GM10248 (cell line): ENCODE measurements at regions of chr6 and their contacts with region 1.

Region 1: GRCh38 chr6:100366419-100366818 is 98.3 kb downstream of the SIM1 start:
- DNase-seq: no peak
- CTCF ChIP-seq: no peak

Region 2: DNA sequence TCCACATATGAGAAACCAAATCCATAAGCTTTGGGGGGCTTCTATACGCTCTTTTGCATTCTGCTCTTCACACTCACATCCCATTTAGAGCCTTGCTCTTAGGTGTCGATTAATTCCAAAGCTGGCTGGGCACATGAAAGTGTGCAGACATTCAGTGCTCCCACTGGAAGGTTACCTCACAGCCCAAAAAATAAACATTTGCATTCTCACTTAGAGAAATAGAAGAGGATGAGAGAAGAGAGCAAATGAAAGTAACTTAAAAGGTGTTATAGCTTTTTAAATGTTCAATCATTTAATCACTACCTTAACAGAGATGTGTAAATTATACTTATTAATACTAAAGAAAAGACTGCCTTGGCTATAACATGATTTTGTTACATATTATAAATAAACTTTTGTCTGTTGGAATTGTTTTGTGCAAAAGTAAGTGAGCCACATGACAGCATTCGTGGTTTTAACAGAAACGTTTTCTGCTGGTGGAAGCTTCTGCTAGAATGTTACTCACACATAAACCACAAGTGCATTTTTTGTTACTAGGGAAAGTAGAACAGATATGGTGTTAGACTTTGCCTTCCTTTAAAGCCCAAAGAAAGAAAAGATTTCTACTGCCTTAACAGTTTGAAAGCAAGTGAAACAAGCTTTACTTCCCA is 18.4 kb before region 1 on chr6:
- CTCF ChIA-PET with region 1: interaction called, 10 read pairs
- POLR2A ChIA-PET with region 1: no interaction called
- DNase-seq: no peak
- CTCF ChIP-seq: no peak

Region 3: GRCh38 chr6:100382767-100383195 is 16.4 kb after region 1 on chr6:
- CTCF ChIA-PET with region 1: no interaction called
- POLR2A ChIA-PET with region 1: no interaction called
- DNase-seq: no peak
- CTCF ChIP-seq: no peak